ENCODE measurements at regions of chr1 and their contacts with region 1.

Region 1: DNA sequence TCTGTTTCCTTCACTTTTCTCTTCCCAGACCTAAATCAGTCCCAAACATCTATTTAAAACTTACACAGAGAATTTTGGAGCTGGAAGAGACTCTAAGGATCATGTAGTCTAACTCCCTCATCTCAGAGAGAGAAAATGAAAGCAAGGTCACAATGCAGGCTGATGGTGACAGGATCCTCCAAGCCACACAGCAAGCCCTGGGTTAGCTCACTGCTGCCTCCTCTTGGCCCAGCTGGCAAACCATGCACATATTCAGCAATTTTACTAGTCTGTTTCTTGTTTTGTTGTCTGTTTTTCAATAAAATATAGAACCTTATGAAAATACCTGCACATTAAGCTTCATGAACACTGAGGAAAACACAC is 27.7 kb upstream of the LY9 start:
- DNase-seq: peak; percentile 94
- ATAC-seq: peak; percentile 95
- H3K4me3 Mint-ChIP-seq: peak overlapping the region; percentile 78
- H3K27ac Mint-ChIP-seq: peak overlapping the region; percentile 91
- H3K4me1 Mint-ChIP-seq: peaks cover 32% of the 10 kb centered on the region
- H3K27me3 Mint-ChIP-seq: no peaks in the 10 kb centered on the region

Region 2: GRCh38 chr1:160681067-160681890 is 87.0 kb before region 1 on chr1:
- CTCF ChIA-PET with region 1: interaction called, 93 read pairs
- DNase-seq: peak; percentile 93
- ATAC-seq: peak; percentile 72
- H3K4me3 Mint-ChIP-seq: no peak overlapping the region
- H3K27ac Mint-ChIP-seq: peak overlapping the region; percentile 92
- H3K4me1 Mint-ChIP-seq: peaks cover 83% of the 10 kb centered on the region
- H3K27me3 Mint-ChIP-seq: no peaks in the 10 kb centered on the region

Region 3: DNA sequence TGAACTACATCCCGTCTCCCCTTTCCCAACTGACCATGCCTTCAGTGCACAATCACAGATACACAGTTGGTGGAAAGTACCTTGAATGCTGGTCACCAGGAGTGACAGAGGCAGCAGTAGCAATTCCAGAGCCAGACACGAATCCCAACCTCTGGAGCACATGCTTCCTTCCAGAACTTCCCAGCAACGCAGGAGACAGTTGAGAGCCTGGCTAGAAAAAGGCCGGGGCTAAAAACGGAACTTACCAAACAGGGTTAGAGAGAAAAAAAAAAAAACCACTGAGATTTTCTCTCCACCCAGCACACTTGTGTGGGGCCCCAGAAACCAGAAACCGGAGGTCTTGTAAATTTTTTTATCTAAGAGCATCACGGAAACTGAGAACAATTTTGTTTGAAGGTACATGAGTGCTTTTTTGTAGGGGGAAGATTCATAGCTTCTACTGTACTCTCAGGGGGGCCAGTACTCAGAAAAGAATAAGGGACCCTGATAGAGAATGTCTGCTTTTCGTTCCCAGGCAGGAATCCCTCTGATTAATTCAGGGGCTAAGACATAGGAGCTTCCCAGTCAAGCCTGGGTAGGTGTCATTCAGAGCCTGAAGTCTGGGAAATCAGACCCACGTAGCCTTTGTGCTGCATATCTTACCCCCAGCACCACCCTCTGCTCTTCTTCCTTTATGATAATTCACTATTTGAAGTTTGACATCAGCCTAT is 56.5 kb before region 1 on chr1 and contains the start of gene CD48:
- CTCF ChIA-PET with region 1: interaction called, 34 read pairs
- DNase-seq: peak; percentile 79
- ATAC-seq: peak; percentile 48
- H3K4me3 Mint-ChIP-seq: no peak within 1 kb of the TSS
- H3K27ac Mint-ChIP-seq: no peak within 1 kb of the TSS
- H3K4me1 Mint-ChIP-seq: peaks cover 27% of the 10 kb centered on the region
- H3K27me3 Mint-ChIP-seq: no peaks in the 10 kb centered on the region
- total RNA-seq, gene CD48: 304 to 332 TPM

Region 4: GRCh38 chr1:160731990-160732389 is 36.3 kb before region 1 on chr1:
- CTCF ChIA-PET with region 1: interaction called, 292 read pairs
- DNase-seq: no peak
- ATAC-seq: no peak
- H3K4me3 Mint-ChIP-seq: no peak overlapping the region
- H3K27ac Mint-ChIP-seq: peak overlapping the region; percentile 48
- H3K4me1 Mint-ChIP-seq: peaks cover 35% of the 10 kb centered on the region
- H3K27me3 Mint-ChIP-seq: no peaks in the 10 kb centered on the region

Region 5: DNA sequence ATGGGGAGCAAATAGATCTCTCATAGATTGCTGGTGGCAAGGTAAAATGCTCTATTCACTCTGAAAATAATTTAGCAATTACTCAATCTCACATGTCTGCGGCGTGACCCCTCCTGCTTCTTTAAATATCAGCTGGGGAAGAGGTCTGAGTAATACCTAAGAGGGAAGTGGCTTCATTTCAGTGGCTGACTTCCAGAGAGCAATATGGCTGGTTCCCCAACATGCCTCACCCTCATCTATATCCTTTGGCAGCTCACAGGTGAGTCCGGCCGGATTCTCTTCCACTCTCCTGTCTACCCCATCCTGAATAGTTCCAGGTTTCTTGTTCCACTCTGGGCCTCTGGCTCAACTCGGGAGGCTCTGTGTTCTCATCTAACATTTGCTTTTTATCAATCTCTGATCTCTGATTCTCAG is 29.2 kb before region 1 on chr1 and contains the start of gene SLAMF7:
- CTCF ChIA-PET with region 1: interaction called, 95 read pairs
- DNase-seq: peak; percentile 81
- ATAC-seq: peak; percentile 69
- H3K4me3 Mint-ChIP-seq: peak within 1 kb of the TSS; percentile 82
- H3K27ac Mint-ChIP-seq: peak within 1 kb of the TSS; percentile 86
- H3K4me1 Mint-ChIP-seq: peaks cover 67% of the 10 kb centered on the region
- H3K27me3 Mint-ChIP-seq: no peaks in the 10 kb centered on the region
- total RNA-seq, gene SLAMF7: 107 to 126 TPM

Region 6: GRCh38 chr1:160748181-160748877 is 19.9 kb before region 1 on chr1:
- CTCF ChIA-PET with region 1: interaction called, 95 read pairs
- DNase-seq: no peak
- ATAC-seq: no peak
- H3K4me3 Mint-ChIP-seq: no peak overlapping the region
- H3K27ac Mint-ChIP-seq: peak overlapping the region; percentile 3
- H3K4me1 Mint-ChIP-seq: peaks cover 93% of the 10 kb centered on the region
- H3K27me3 Mint-ChIP-seq: no peaks in the 10 kb centered on the region

Region 7: DNA sequence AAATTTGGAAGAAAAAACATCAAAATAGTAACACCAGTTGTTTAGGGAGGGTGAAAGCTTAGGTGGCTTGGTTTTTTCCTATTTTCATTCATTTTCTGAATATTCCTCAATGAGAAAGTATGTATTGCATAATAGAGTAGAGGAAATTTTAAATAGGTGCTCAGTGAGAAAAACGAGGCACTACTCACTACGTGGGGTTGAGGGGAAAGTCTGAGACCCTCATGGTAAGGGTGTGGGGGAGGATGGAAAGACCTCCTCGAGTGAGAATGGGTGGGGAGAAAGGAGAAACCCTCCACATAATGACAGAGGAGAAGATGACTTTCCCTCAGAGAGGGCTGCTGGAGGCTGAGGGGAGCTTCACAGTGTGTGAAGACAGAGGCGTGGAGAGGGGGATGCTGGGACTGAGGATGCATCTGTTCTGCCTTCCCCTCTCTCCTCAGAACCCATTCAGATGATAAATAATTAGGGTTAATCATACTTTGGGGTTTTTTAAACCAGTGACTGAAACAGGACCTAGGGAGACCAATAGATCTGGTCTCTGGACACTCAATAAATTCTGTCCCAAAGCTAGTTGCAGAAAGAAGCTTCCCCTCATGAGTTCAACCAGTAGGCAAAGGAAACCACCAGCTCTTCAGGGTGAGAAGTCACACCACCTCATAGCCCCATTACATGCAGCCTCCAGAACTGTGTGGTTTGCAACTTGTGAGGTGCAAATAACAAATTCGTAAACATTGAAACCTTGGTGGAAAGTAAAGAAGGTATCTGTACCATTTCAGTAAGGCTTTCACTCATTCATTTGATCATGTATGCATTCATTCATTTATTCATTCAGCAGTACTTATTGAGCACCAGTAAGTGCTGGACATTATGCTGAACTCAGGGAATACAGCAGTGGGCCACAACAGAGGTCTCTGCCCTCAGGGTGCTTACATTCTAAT is 12.1 kb before region 1 on chr1:
- CTCF ChIA-PET with region 1: interaction called, 35 read pairs
- DNase-seq: peak; percentile 84
- ATAC-seq: peak; percentile 83
- H3K4me3 Mint-ChIP-seq: peak overlapping the region; percentile 25
- H3K27ac Mint-ChIP-seq: peak overlapping the region; percentile 94
- H3K4me1 Mint-ChIP-seq: peaks cover 61% of the 10 kb centered on the region
- H3K27me3 Mint-ChIP-seq: no peaks in the 10 kb centered on the region

Region 8: GRCh38 chr1:160823296-160823695 is 55.0 kb after region 1 on chr1:
- CTCF ChIA-PET with region 1: no interaction called
- DNase-seq: no peak
- ATAC-seq: no peak
- H3K4me3 Mint-ChIP-seq: no peak overlapping the region
- H3K27ac Mint-ChIP-seq: no peak overlapping the region
- H3K4me1 Mint-ChIP-seq: no peaks in the 10 kb centered on the region
- H3K27me3 Mint-ChIP-seq: no peaks in the 10 kb centered on the region

Measured in activated CD8-positive, alpha-beta memory T cell treated with anti-CD3 and anti-CD28 coated beads, Interleukin-2, amount 10 ng/mL, durations not matched to agents 7 days and 5 days (primary cell).